AG04450 (cell line): ENCODE measurements at regions of chr2 and their contacts with region 1.

Region 1: GRCh38 chr2:57720728-57721627 is 325.6 kb upstream of the VRK2 start:
- DNase-seq: peak; percentile 20
- H3K4me3 ChIP-seq: 0 out of 2 replicates have a peak overlapping the region, but pooled peaks have one; percentile 21
- H3K27ac ChIP-seq: no peak overlapping the region
- H3K27me3 ChIP-seq: no peaks in the 10 kb centered on the region
- CTCF ChIP-seq: peak; percentile 84

Region 2: GRCh38 chr2:57376985-57377384 is 344.0 kb before region 1 on chr2:
- CTCF ChIA-PET with region 1: no interaction called
- POLR2A ChIA-PET with region 1: no interaction called
- DNase-seq: no peak
- H3K4me3 ChIP-seq: no peak overlapping the region
- H3K27ac ChIP-seq: no peak overlapping the region
- H3K27me3 ChIP-seq: no peaks in the 10 kb centered on the region
- CTCF ChIP-seq: no peak

Region 3: DNA sequence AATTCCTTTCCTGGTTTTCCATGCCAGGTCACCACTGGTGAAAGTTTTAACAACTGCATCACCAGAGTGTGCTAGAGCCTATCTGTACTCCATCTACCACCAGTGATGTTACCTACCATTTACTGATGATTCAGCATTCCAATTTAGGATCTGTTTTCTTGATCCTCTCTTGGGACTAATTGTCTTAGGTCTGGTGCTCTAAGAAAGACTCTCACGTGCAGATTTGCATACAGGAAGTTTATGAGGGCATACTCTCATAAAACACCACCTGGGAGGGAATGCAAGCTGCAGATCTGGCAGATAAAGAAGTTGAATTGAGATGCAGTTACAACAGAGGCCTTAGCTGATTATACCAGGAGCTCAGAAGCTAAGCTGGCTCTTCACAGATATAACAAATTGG is 22.0 kb before region 1 on chr2:
- CTCF ChIA-PET with region 1: interaction called, 11 read pairs
- POLR2A ChIA-PET with region 1: no interaction called
- DNase-seq: no peak
- H3K4me3 ChIP-seq: no peak overlapping the region
- H3K27ac ChIP-seq: no peak overlapping the region
- H3K27me3 ChIP-seq: no peaks in the 10 kb centered on the region
- CTCF ChIP-seq: no peak

Region 4: DNA sequence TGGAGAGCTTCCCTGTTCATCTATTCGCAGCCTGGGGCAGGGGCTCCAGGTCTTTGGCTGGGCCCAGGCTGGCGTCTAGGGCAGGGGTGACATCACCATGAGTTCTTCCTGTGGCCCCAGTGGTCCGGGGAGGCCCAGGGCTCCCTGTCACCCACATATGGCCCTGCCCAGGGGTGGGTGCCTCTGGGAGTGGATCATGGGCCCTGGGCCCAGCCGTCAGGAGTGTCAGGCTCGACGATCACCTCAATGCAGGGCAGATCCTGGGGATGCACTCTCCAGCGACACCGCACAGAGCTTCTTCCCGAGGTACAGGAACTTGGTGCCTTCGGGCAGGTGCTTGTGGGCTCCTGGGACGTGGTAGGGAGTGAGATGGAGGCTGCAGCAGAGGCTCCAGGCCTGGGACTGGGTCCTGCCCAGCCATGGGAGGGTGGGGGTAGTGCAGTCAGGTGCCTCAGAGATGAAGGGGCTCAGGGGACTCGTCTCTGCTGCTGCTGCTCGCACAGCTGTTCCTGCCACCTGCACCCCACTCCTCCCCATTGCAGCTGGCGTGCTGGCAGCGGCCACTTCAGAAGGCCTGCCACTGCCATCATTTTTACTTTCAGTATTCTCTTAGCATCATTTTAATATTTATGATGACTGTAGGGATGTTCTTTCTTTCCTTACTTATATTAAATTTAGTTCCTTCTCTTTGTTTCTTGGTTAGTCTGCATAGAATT is 129.6 kb after region 1 on chr2:
- CTCF ChIA-PET with region 1: no interaction called
- POLR2A ChIA-PET with region 1: no interaction called
- DNase-seq: no peak
- H3K4me3 ChIP-seq: no peak overlapping the region
- H3K27ac ChIP-seq: no peak overlapping the region
- H3K27me3 ChIP-seq: no peaks in the 10 kb centered on the region
- CTCF ChIP-seq: no peak